ENCODE measurements at regions of chr21 and their contacts with region 1.

Region 1: GRCh38 chr21:27631471-27631870 is 664.6 kb upstream of the ADAMTS5 start:
- DNase-seq: no peak
- ATAC-seq: no peak
- H3K4me3 ChIP-seq: no peak overlapping the region
- H3K27ac ChIP-seq: no peak overlapping the region
- H3K4me1 ChIP-seq: peaks cover 3 to 7% of the 10 kb centered on the region in 2 donors
- H3K27me3 ChIP-seq: no peaks in the 10 kb centered on the region
- CTCF ChIP-seq: no peak
- POLR2A ChIP-seq: no peak

Region 2: GRCh38 chr21:28069450-28069923 is 438.0 kb after region 1 on chr21:
- in situ Hi-C with region 1: no loop called
- intact Hi-C with region 1: loop called (anchors 10 kb)
- DNase-seq: peak in 1 of 2 donors; percentile 25
- ATAC-seq: peak; percentile 63 to 70
- H3K4me3 ChIP-seq: peak overlapping the region; percentile 9 to 38 (median 20)
- H3K27ac ChIP-seq: peak overlapping the region; percentile 87 to 91 (median 88)
- H3K4me1 ChIP-seq: peaks cover 17 to 43% of the 10 kb centered on the region in 2 donors
- H3K27me3 ChIP-seq: no peaks in the 10 kb centered on the region
- CTCF ChIP-seq: no peak
- POLR2A ChIP-seq: no peak

Measured in gastrocnemius medialis (tissue), 4 donors.